CD8-positive, alpha-beta T cell (primary cell): ENCODE measurements at regions of chr6 and their contacts with region 1.

Region 1: GRCh38 chr6:28443112-28443773 is at the start of gene ZSCAN23:
- DNase-seq: peak; percentile 69 to 95 (median 85)
- ATAC-seq: peak; percentile 90
- H3K4me3 ChIP-seq: peak within 1 kb of the TSS; percentile 53 to 63
- H3K4me3 Mint-ChIP-seq: peak within 1 kb of the TSS; percentile 89
- H3K27ac ChIP-seq: peak within 1 kb of the TSS; percentile 52 to 54
- H3K27ac Mint-ChIP-seq: peak within 1 kb of the TSS; percentile 89
- H3K4me1 ChIP-seq: peaks cover 28% of the 10 kb centered on the region
- H3K4me1 Mint-ChIP-seq: peaks cover 31% of the 10 kb centered on the region
- H3K27me3 ChIP-seq: peaks cover 0 to 11% of the 10 kb centered on the region in 2 experiments
- H3K27me3 Mint-ChIP-seq: peaks cover 38% of the 10 kb centered on the region
- CTCF ChIP-seq: no peak
- total RNA-seq, gene ZSCAN23: not detected

Region 2: DNA sequence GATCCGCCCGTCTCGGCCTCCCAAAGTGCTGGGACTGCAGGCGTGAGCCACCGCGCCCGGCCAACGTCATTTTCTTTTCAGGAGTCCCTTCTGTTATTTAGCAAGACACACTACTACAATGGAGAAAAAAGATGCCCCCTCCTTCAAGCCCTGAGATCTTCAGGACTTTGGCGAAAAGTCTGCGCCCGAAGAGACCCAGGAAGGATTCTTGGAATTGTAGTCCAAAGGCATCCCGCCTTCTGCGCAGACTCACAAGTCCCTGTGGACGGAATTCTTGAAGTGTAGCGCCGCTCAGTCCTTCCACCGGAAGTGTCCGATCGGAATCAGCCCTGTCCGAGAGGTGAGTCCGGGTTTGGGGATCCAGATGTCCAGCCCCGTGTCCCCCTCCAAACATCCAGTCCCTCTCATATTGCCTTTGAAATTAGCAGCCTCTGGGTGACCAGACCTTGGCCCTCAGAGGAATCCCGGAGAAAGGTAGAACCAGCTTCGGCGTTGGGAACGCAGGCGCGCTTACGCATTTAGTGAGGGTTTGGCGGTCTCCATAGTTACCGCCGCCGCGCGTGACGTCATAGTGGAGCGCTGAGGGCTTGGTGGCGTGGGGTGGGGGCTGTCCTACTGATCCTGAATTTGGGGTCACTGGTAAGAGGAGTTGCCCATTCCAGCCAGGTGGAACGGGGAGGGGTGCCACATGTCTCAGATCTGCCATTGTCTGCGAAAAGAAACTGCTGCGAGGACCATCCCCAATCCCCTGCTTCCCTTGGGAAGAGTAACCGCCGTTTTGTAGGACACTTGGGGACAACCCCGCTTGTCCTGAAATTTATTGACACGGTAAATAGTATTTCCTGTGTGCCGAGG is 362.4 kb before region 1 on chr6:
- CTCF ChIA-PET with region 1: no interaction called
- POLR2A ChIA-PET with region 1: no interaction called
- intact Hi-C with region 1: no loop called
- DNase-seq: peak; percentile 86 to 96 (median 94)
- ATAC-seq: peak; percentile 74
- H3K4me3 ChIP-seq: peak overlapping the region; percentile 69 to 93
- H3K4me3 Mint-ChIP-seq: peak overlapping the region; percentile 98
- H3K27ac ChIP-seq: peak overlapping the region; percentile 91 to 96
- H3K27ac Mint-ChIP-seq: peak overlapping the region; percentile 99
- H3K4me1 ChIP-seq: peaks cover 13% of the 10 kb centered on the region
- H3K4me1 Mint-ChIP-seq: peaks cover 21% of the 10 kb centered on the region
- H3K27me3 ChIP-seq: no peaks in the 10 kb centered on the region
- H3K27me3 Mint-ChIP-seq: no peaks in the 10 kb centered on the region
- CTCF ChIP-seq: no peak

Region 3: DNA sequence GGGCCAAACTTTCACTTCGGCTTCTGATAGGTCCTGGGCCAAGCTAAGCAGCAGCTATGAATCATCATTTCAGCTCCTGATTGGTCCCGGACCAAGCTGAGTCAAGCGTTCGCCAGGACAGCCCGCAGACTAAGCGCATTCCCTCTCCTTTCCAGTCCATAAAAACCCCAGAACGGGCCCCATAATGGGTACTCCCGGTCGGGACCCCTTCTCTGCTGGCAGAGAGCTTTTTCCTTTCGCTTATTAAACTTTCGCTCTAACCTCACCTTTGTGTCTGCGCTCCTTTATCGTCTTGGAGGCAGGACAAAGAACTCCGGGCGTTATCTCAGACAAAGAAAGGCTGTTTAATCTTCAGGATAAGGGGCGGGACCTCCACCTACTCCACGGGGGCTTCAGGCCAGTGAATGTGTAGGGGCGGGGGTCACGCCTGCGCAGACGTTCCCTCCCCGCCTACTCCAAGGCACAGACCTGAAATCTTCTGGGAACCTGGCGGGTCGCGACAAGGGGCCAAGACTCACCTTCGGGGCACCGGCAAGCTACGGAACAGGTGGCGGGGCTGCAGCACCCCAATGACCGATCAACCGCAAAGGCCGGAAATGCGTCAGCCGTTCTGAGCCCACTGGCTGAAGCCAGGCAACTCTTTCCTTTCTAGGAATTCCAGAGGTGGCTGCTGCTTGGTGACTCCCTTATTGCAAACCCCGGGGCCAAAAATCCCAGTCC is 107.5 kb before region 1 on chr6 and contains the start of gene ZSCAN31:
- CTCF ChIA-PET with region 1: no interaction called
- POLR2A ChIA-PET with region 1: no interaction called
- intact Hi-C with region 1: loop called in 1 of 2 experiments (anchors 5 kb)
- DNase-seq: peak; percentile 64 to 94 (median 80)
- ATAC-seq: peak; percentile 86
- H3K4me3 ChIP-seq: peak within 1 kb of the TSS; percentile 77 to 85
- H3K4me3 Mint-ChIP-seq: no peak within 1 kb of the TSS
- H3K27ac ChIP-seq: peak within 1 kb of the TSS; percentile 94 to 96
- H3K27ac Mint-ChIP-seq: no peak within 1 kb of the TSS
- H3K4me1 ChIP-seq: peaks cover 15% of the 10 kb centered on the region
- H3K4me1 Mint-ChIP-seq: peaks cover 9% of the 10 kb centered on the region
- H3K27me3 ChIP-seq: no peaks in the 10 kb centered on the region
- H3K27me3 Mint-ChIP-seq: no peaks in the 10 kb centered on the region
- CTCF ChIP-seq: no peak
- total RNA-seq, gene ZSCAN31: 1.4 to 1.9 TPM

Region 4: DNA sequence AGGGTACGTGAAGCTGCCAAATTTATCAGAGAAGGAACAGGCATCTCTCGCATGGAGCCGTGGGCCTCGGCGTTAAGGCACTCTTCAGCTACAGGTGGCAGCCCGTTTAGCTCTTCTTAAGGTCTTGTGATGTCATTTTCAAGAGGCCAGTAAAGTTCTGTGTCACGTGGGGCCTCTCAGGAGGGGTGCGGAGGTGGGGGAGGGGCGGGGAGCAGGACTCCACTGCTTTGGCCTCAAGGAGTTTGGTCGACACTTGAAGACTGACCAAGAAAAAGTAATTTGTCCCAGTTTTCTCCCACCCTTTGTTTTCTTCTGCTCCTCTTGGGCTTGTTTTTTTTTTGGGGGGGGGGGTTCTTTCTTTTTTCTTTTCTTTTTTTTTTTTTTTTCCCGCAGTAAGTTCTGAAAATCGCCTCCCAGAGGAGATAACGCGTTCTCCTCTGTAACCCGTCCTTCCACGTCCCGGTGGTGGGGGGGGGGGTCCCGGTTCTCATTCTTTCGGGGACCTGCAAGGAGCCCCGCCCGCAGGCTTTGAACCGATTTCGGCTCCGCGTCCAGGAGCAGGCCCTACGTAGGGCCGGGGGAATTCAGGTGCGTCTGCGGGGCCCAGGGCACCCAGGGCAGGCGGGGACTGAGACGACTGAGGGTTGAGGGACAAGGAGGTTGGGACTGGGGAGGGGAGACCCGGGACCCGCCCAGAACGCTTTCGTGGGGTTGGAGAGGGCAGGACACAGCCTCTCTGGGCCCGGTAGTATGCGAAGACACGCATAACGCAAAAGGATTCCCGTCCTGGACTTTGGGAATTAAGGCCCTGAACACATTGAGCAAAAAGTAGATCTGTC is 46.3 kb after region 1 on chr6:
- CTCF ChIA-PET with region 1: no interaction called
- POLR2A ChIA-PET with region 1: no interaction called
- intact Hi-C with region 1: loop called in 1 of 2 experiments (anchors 5 kb)
- DNase-seq: peak in 8 of 9 experiments; percentile 11 to 68 (median 34)
- ATAC-seq: peak; percentile 59
- H3K4me3 ChIP-seq: peak overlapping the region; percentile 18 to 34
- H3K4me3 Mint-ChIP-seq: peak overlapping the region; percentile 74
- H3K27ac ChIP-seq: peak overlapping the region in 1 of 2 experiments; percentile 47
- H3K27ac Mint-ChIP-seq: peak overlapping the region; percentile 71
- H3K4me1 ChIP-seq: peaks cover 21% of the 10 kb centered on the region
- H3K4me1 Mint-ChIP-seq: peaks cover 16% of the 10 kb centered on the region
- H3K27me3 ChIP-seq: peaks cover 3 to 9% of the 10 kb centered on the region in 2 experiments
- H3K27me3 Mint-ChIP-seq: peaks cover 70% of the 10 kb centered on the region
- CTCF ChIP-seq: no peak

Region 5: GRCh38 chr6:28523241-28523622 is 80.0 kb after region 1 on chr6:
- CTCF ChIA-PET with region 1: no interaction called
- POLR2A ChIA-PET with region 1: no interaction called
- intact Hi-C with region 1: loop called in 1 of 2 experiments (anchors 10 kb)
- DNase-seq: peak in 8 of 9 experiments; percentile 31 to 70 (median 56)
- ATAC-seq: peak; percentile 94
- H3K4me3 ChIP-seq: no peak overlapping the region
- H3K4me3 Mint-ChIP-seq: peak overlapping the region; percentile 53
- H3K27ac ChIP-seq: no peak overlapping the region
- H3K27ac Mint-ChIP-seq: no peak overlapping the region
- H3K4me1 ChIP-seq: peaks cover 25% of the 10 kb centered on the region
- H3K4me1 Mint-ChIP-seq: peaks cover 20% of the 10 kb centered on the region
- H3K27me3 ChIP-seq: peaks cover 0 to 2% of the 10 kb centered on the region in 2 experiments
- H3K27me3 Mint-ChIP-seq: peaks cover 51% of the 10 kb centered on the region
- CTCF ChIP-seq: no peak